ENCODE measurements at regions of chr14 and their contacts with region 1.

Region 1: GRCh38 chr14:77616454-77617229 is at the start of gene SPTLC2:
- DNase-seq: peak; percentile 95 to 99 (median 97)
- H3K4me3 ChIP-seq: peak within 1 kb of the TSS; percentile 50 to 59
- H3K4me3 Mint-ChIP-seq: peak within 1 kb of the TSS; percentile 88 to 98 (median 92)
- H3K27ac ChIP-seq: peak within 1 kb of the TSS; percentile 68
- H3K27ac Mint-ChIP-seq: peak within 1 kb of the TSS; percentile 86 to 96 (median 92)
- H3K4me1 ChIP-seq: peaks cover 44% of the 10 kb centered on the region
- H3K4me1 Mint-ChIP-seq: peaks cover 29 to 52% (median 38%) of the 10 kb centered on the region in 4 donors
- H3K27me3 ChIP-seq: no peaks in the 10 kb centered on the region
- H3K27me3 Mint-ChIP-seq: no peaks in the 10 kb centered on the region
- total RNA-seq, gene SPTLC2: 25.9 to 31.3 TPM

Region 2: DNA sequence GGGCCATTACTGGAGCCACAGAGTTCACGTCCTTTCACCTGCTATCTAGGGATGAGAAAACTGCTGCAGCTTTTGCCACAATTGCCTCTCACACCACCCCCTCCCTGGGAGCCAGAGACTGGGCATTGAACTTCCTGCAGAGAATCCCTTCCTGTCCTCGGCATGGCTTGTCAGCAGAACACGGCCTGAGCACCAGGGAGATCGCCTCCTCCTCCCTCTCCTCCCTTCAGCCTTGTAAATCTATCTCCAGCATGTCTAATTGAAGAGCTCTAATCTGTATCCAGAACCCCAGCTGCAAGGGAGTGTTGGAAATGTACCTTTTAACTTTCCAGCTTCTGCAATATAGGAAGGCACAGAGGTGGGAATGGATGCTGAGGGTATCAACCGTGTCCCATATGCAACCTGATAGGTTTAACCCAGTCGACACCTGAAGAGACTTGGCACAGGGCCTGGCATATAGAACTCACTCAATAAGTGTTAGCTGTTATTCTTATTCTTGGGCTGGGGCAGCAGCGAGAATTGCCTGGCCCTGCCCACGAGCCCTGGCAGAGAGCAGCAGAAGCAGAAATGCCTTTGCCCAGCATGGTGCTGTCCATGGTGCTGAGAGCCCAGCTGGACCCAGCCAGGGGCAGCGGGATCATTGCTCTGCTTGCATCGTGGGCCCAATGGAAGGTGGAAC is 408.2 kb before region 1 on chr14:
- CTCF ChIA-PET with region 1: no interaction called
- POLR2A ChIA-PET with region 1: no interaction called
- intact Hi-C with region 1: no loop called
- DNase-seq: peak; percentile 33 to 44 (median 37)
- H3K4me3 ChIP-seq: no peak overlapping the region
- H3K4me3 Mint-ChIP-seq: no peak overlapping the region
- H3K27ac ChIP-seq: no peak overlapping the region
- H3K27ac Mint-ChIP-seq: no peak overlapping the region
- H3K4me1 ChIP-seq: no peaks in the 10 kb centered on the region
- H3K4me1 Mint-ChIP-seq: no peaks in the 10 kb centered on the region
- H3K27me3 ChIP-seq: no peaks in the 10 kb centered on the region
- H3K27me3 Mint-ChIP-seq: peaks cover 5 to 8% of the 10 kb centered on the region in 2 donors

Region 3: DNA sequence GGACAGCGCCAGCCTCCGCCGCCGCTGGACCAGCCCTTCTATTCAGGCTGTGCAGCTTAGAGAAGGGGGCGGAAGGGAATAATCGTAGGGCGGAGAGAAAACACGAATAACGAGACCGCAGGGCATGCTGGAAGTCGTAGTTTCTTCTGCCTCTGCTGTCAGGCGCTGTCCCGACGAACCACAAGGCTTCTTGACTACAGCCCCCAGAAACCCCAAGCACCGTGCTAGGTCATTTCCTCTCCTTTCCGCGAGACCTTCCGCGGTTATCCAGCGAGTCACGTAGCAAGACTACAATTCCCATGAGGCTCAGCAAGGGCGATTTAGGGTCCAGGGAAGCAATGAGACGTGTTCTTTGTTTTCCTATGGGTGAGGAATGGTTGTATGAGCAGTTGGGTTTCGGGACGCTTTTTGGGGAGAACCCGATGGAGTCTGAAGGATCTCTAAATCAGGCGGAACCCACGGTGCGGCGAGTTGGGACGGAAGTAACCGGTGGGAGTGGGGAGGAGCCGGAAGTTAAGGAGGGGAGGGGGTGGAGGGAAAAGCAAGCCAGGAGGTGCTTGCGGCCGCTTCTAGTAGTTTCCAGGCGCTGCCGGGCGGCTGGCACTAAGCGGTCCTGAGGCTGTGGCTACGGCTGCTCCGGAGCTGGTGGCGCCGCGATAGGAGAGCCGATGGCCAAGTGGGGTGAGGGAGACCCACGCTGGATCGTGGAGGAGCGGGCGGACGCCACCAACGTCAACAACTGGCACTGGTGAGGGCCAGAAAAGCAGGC is 158.9 kb before region 1 on chr14 and contains the starts of genes AHSA1 and VIPAS39:
- CTCF ChIA-PET with region 1: interaction called, 8 read pairs
- POLR2A ChIA-PET with region 1: interaction called, 3 read pairs
- intact Hi-C with region 1: loop called (anchors 1 kb)
- DNase-seq: peak; percentile 96 to 99 (median 96)
- H3K4me3 ChIP-seq: peak within 1 kb of the TSS; percentile 99 to 100
- H3K4me3 Mint-ChIP-seq: peak within 1 kb of the TSS; percentile 100
- H3K27ac ChIP-seq: peak within 1 kb of the TSS; percentile 86
- H3K27ac Mint-ChIP-seq: peak within 1 kb of the TSS; percentile 94 to 100 (median 100)
- H3K4me1 ChIP-seq: peaks cover 29% of the 10 kb centered on the region
- H3K4me1 Mint-ChIP-seq: peaks cover 28 to 50% (median 36%) of the 10 kb centered on the region in 4 donors
- H3K27me3 ChIP-seq: no peaks in the 10 kb centered on the region
- H3K27me3 Mint-ChIP-seq: no peaks in the 10 kb centered on the region
- total RNA-seq, gene AHSA1: 88.5 to 89.9 TPM
- total RNA-seq, gene VIPAS39: 18.6 to 22.5 TPM

Region 4: GRCh38 chr14:77598366-77599070 is 18.1 kb before region 1 on chr14:
- CTCF ChIA-PET with region 1: interaction called, 4 read pairs
- POLR2A ChIA-PET with region 1: interaction called, 7 read pairs
- intact Hi-C with region 1: loop called (anchors 2 kb)
- DNase-seq: peak; percentile 42 to 62 (median 54)
- H3K4me3 ChIP-seq: no peak overlapping the region
- H3K4me3 Mint-ChIP-seq: peak overlapping the region; percentile 57 to 78 (median 70)
- H3K27ac ChIP-seq: peak overlapping the region; percentile 61
- H3K27ac Mint-ChIP-seq: peak overlapping the region; percentile 89 to 95 (median 91)
- H3K4me1 ChIP-seq: peaks cover 42% of the 10 kb centered on the region
- H3K4me1 Mint-ChIP-seq: peaks cover 39 to 71% (median 52%) of the 10 kb centered on the region in 4 donors
- H3K27me3 ChIP-seq: no peaks in the 10 kb centered on the region
- H3K27me3 Mint-ChIP-seq: no peaks in the 10 kb centered on the region

Region 5: DNA sequence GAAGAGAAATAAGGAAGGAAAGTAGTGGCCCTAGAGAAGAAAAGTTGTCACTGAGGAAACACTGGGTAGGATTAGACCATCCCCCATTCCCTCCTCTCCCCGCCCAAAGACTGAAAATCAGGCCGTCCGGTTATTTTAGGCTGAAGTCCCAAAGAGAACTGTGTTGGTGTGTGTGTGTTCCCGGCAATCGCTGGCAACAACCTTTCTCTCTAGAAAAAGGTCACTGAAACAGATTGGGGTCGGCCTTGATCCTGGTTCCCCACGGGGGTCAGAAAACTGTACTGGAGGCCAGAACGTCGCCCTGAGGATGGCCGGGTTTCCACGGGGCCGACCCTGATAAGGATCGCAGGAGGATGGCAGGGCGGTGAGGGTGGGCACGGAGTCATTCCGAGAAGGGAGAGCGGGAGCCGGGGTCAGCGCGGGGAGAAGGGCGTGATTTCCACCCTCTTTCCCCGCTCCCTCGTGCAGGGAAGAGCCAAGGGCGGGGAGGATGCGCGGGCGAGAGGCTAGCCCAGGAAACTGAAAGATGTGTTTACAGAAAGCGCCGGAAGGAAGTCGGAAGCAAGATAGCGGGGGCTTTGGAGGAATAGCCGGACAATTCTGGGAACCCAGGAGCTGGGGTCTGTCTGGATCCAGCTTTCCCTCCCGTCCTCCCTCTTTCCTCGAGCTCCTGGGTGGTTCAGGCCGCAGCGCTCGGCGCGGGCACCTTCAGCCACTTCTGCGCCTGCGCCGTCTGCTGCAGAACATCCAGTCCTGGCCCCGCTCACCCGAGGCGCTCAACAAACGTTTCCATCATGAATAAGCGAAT is 25.1 kb after region 1 on chr14:
- CTCF ChIA-PET with region 1: no interaction called
- POLR2A ChIA-PET with region 1: no interaction called
- intact Hi-C with region 1: loop called (anchors 1 kb)
- DNase-seq: peak; percentile 48 to 63 (median 56)
- H3K4me3 ChIP-seq: peak overlapping the region; percentile 57 to 59
- H3K4me3 Mint-ChIP-seq: peak overlapping the region; percentile 88 to 94 (median 90)
- H3K27ac ChIP-seq: peak overlapping the region; percentile 55
- H3K27ac Mint-ChIP-seq: peak overlapping the region; percentile 73 to 95 (median 92)
- H3K4me1 ChIP-seq: peaks cover 13% of the 10 kb centered on the region
- H3K4me1 Mint-ChIP-seq: peaks cover 9 to 16% (median 13%) of the 10 kb centered on the region in 4 donors
- H3K27me3 ChIP-seq: no peaks in the 10 kb centered on the region
- H3K27me3 Mint-ChIP-seq: peaks cover 0 to 1% of the 10 kb centered on the region in 2 donors

Region 6: DNA sequence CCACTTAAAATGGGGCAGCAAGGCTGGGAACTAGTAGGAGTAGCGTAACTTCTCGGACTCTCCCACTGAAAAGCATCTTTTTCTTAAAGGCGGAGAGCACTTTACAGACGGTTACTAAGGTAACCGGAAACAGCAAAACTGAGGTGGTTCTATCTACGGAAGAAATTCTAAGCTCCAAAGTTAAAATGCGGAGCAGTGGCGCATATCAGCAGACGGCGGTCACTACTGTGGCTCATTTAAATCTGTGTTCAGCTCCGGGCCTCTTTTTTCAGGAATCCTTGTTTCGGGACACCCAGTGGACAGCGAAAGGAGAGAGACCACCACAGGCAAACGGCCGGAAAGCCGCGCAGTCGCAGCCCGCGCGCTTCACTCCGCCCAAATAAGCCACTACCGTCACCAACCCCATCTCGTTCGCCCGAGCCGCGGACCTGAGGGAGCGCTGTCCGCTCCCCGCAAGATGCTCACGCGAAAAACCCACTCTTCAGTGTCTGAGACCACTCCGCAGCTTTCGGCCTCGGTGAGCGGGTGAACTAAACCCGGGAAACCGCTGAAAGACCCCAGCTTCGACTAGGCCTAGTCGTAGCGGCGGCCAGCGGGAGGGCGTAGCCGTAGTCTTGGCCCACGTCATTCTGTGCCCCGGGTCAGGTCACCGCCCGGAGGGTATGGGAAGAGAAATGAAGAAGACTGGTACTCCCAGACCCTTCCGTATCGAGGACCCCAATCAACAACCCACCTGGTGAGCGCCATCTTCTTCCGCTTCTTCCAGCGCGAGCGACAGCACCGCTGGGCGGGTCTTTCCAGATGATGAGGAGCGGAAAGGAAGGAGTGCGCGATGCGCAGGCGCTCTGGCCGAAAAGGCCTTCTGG is 144.0 kb after region 1 on chr14 and contains the start of gene SNW1:
- CTCF ChIA-PET with region 1: no interaction called
- POLR2A ChIA-PET with region 1: no interaction called
- intact Hi-C with region 1: loop called (anchors 1 kb)
- DNase-seq: peak; percentile 89 to 94 (median 92)
- H3K4me3 ChIP-seq: peak within 1 kb of the TSS; percentile 94 to 98
- H3K4me3 Mint-ChIP-seq: peak within 1 kb of the TSS; percentile 95 to 98 (median 97)
- H3K27ac ChIP-seq: peak within 1 kb of the TSS; percentile 99
- H3K27ac Mint-ChIP-seq: peak within 1 kb of the TSS; percentile 97 to 100 (median 98)
- H3K4me1 ChIP-seq: peaks cover 52% of the 10 kb centered on the region
- H3K4me1 Mint-ChIP-seq: peaks cover 23 to 63% (median 39%) of the 10 kb centered on the region in 4 donors
- H3K27me3 ChIP-seq: no peaks in the 10 kb centered on the region
- H3K27me3 Mint-ChIP-seq: no peaks in the 10 kb centered on the region
- total RNA-seq, gene SNW1: 92.1 to 99.7 TPM

Region 7: GRCh38 chr14:79483477-79484388 is 1867.1 kb after region 1 on chr14:
- CTCF ChIA-PET with region 1: no interaction called
- POLR2A ChIA-PET with region 1: no interaction called
- intact Hi-C with region 1: no loop called
- DNase-seq: no peak
- H3K4me3 ChIP-seq: no peak overlapping the region
- H3K4me3 Mint-ChIP-seq: peak overlapping the region in 1 of 8 donors; percentile 24
- H3K27ac ChIP-seq: no peak overlapping the region
- H3K27ac Mint-ChIP-seq: no peak overlapping the region
- H3K4me1 ChIP-seq: no peaks in the 10 kb centered on the region
- H3K4me1 Mint-ChIP-seq: no peaks in the 10 kb centered on the region
- H3K27me3 ChIP-seq: no peaks in the 10 kb centered on the region
- H3K27me3 Mint-ChIP-seq: no peaks in the 10 kb centered on the region

Measured in CD4-positive, alpha-beta memory T cell (primary cell).